ENCODE measurements at regions of chr5 and their contacts with region 1.

Region 1: DNA sequence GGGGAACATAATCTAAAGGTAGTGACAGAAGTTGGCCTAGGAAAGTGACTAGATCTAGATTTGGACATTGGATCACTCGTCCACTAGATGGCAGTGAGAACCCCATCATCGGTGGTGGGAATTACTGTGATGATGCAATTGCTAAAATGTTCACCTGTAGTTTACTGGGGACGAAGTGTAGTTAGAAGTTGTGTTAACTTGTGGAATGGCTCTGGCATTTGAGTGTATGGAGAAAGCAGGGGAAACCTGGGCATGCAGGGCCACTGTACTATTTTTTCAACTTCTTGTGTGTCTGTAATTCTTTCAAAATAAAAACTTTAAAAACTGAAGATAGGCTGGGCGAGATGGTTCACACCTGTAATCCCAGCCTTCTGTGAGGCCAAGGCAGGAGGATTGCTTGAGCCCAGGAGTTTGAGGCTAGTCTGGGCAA is 75.5 kb downstream of the PHAX start:
- DNase-seq: peak in 1 of 3 donors; percentile 63
- ATAC-seq: peak; percentile 97 to 100 (median 98)
- H3K4me3 ChIP-seq: no peak overlapping the region
- H3K27ac ChIP-seq: no peak overlapping the region
- H3K4me1 ChIP-seq: no peaks in the 10 kb centered on the region
- H3K27me3 ChIP-seq: no peaks in the 10 kb centered on the region
- CTCF ChIP-seq: peak; percentile 83 to 89 (median 86)
- POLR2A ChIP-seq: no peak

Region 2: GRCh38 chr5:126776497-126777256 is 100.5 kb after region 1 on chr5 and contains the start of gene LMNB1:
- intact Hi-C with region 1: loop called (anchors 5 to 10 kb)
- DNase-seq: peak; percentile 96 to 97 (median 96)
- ATAC-seq: peak; percentile 85 to 92 (median 88)
- H3K4me3 ChIP-seq: peak within 1 kb of the TSS; percentile 71 to 81 (median 80)
- H3K27ac ChIP-seq: peak within 1 kb of the TSS; percentile 86 to 88 (median 87)
- H3K4me1 ChIP-seq: peaks cover 0 to 5% (median 2%) of the 10 kb centered on the region in 4 donors
- H3K27me3 ChIP-seq: no peaks in the 10 kb centered on the region
- CTCF ChIP-seq: peak in 2 of 4 donors; percentile 10 to 14
- POLR2A ChIP-seq: peak; percentile 72
- total RNA-seq, gene LMNB1: 3.3 to 13.3 (median 7.1) TPM

Measured in right lobe of liver (tissue), 6 donors.